Sciatic nerve (tissue), 2 donors: ENCODE measurements at regions of chr9 and their contacts with region 1.

Region 1: DNA sequence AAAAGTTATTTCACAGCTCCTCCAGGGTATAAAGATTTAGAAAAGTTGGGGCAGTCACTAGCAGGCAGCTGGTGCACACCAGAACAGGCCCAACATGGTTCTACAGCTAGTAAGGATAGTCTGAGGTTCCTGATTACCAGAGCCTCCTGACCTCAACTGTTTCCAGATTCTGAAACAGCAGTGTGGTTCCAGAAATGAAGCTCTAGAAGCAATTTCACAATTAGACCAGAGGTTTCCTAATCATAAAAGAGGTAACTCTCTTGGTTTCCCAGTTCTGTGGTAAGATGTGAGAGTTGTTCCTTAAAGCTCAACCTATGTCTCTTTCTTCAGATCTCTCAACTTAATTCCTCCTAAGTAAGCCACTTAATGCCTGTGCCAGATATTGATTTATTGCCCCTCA is 11.9 kb downstream of the AGTPBP1 start:
- DNase-seq: no peak
- ATAC-seq: no peak

Region 2: DNA sequence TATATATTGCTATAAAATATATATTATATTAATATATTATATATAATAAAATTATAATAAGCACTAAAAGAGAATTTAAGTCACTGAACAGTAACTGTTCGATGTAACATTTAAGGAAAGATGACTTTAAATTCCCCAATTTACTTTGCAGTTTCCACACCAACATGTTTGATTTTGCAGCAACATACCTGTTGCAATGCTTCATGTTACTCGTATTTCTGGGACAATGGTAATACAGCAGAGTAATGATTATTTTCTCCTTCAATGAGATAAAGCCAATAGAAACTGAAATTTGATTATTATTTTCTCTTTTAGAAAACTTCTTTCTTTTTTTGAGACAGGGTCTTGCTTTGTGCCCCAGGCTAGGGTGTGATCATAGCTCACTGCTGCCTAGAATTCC is 201.6 kb after region 1 on chr9:
- intact Hi-C with region 1: no loop called
- DNase-seq: no peak
- ATAC-seq: no peak

Region 3: GRCh38 chr9:87193925-87194868 is 1464.3 kb after region 1 on chr9:
- intact Hi-C with region 1: loop called (anchors 10 kb)
- DNase-seq: no peak
- ATAC-seq: peak; percentile 73